IMR-90 (cell line): ENCODE measurements at regions of chr15 and their contacts with region 1.

Region 1: GRCh38 chr15:75453703-75454470 is 2.4 kb upstream of the SIN3A start:
- DNase-seq: peak; percentile 100
- ATAC-seq: peak; percentile 36
- H3K4me3 ChIP-seq: peak overlapping the region; percentile 60
- H3K27ac ChIP-seq: peak overlapping the region; percentile 85
- H3K4me1 ChIP-seq: peaks cover 11% of the 10 kb centered on the region
- H3K27me3 ChIP-seq: no peaks in the 10 kb centered on the region
- CTCF ChIP-seq: no peak
- POLR2A ChIP-seq: peak; percentile 72
- RAD21 ChIP-seq: no peak

Region 2: GRCh38 chr15:75023181-75023871 is 430.6 kb before region 1 on chr15 and contains the start of gene PPCDC:
- CTCF ChIA-PET with region 1: no interaction called
- POLR2A ChIA-PET with region 1: no interaction called
- dilution Hi-C with region 1: no loop called
- in situ Hi-C with region 1: no loop called
- intact Hi-C with region 1: loop called (anchors 10 kb)
- DNase-seq: peak; percentile 92
- ATAC-seq: peak; percentile 100
- H3K4me3 ChIP-seq: peak within 1 kb of the TSS; percentile 64
- H3K27ac ChIP-seq: peak within 1 kb of the TSS; percentile 75
- H3K4me1 ChIP-seq: peaks cover 2% of the 10 kb centered on the region; the same call in 1 of the 2 replicates
- H3K27me3 ChIP-seq: peaks cover 1% of the 10 kb centered on the region; the same call in 1 of the 2 replicates
- CTCF ChIP-seq: no peak
- POLR2A ChIP-seq: peak; percentile 84
- RAD21 ChIP-seq: no peak
- total RNA-seq, gene PPCDC: 5.6 and 13.3 TPM in 2 replicates

Region 3: GRCh38 chr15:75367913-75368688 is 85.8 kb before region 1 on chr15 and contains the start of gene MAN2C1:
- CTCF ChIA-PET with region 1: interaction called, 8 read pairs
- POLR2A ChIA-PET with region 1: no interaction called
- dilution Hi-C with region 1: no loop called
- in situ Hi-C with region 1: no loop called
- intact Hi-C with region 1: loop called (anchors 1 kb)
- DNase-seq: peak; percentile 94
- ATAC-seq: peak; percentile 93
- H3K4me3 ChIP-seq: peak within 1 kb of the TSS; percentile 71
- H3K27ac ChIP-seq: peak within 1 kb of the TSS; percentile 86
- H3K4me1 ChIP-seq: peaks cover 4% of the 10 kb centered on the region
- H3K27me3 ChIP-seq: no peaks in the 10 kb centered on the region
- CTCF ChIP-seq: peak; percentile 78
- POLR2A ChIP-seq: peak; percentile 92
- RAD21 ChIP-seq: peak; percentile 58
- total RNA-seq, gene MAN2C1: 29.7 and 34.8 TPM in 2 replicates

Region 4: GRCh38 chr15:75468913-75469598 is 15.2 kb after region 1 on chr15:
- CTCF ChIA-PET with region 1: no interaction called
- POLR2A ChIA-PET with region 1: interaction called, 34 read pairs
- dilution Hi-C with region 1: no loop called
- in situ Hi-C with region 1: no loop called
- intact Hi-C with region 1: no loop called
- DNase-seq: no peak
- ATAC-seq: no peak
- H3K4me3 ChIP-seq: no peak overlapping the region
- H3K27ac ChIP-seq: no peak overlapping the region
- H3K4me1 ChIP-seq: no peaks in the 10 kb centered on the region
- H3K27me3 ChIP-seq: no peaks in the 10 kb centered on the region
- CTCF ChIP-seq: no peak
- POLR2A ChIP-seq: no peak
- RAD21 ChIP-seq: no peak

Region 5: DNA sequence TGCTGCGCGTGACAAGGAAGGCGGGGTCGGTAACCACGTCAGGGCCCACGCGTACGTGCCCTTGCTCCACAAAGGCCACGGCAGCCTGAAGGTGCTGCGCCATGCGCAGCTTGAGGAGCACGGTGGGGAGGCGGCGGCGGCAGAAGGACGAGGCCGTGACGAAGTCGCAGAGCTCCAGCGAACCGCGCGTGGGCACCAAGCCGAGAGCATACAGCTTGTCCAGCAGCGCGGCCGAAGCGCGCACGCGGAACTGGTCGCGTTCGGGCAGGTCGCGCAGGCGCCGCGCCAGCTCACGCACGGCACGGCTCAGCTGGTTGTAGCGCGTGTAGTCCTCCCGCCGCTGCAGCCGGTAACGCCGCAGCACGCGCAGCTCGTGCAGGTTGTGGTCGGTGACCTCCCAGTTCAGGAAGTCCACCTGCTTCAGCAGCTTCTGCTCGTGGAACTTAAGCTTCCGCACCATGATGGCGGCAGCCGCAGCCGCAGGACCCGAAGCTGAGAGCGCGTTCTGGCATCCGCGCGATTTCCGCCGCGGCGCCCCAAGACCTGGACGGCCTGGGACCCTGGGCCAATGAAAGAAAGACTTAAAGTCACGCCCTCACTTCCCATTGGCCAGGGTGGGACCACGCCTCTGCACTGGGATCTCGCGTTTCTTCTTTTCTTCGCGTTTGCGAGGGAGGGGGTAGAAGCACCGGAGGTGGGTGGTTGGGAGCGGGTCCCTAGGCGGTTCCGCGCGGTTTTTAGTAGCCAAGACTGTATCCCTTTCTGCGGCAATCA is 186.0 kb after region 1 on chr15 and contains the start of gene IMP3:
- CTCF ChIA-PET with region 1: no interaction called
- POLR2A ChIA-PET with region 1: no interaction called
- dilution Hi-C with region 1: no loop called
- in situ Hi-C with region 1: no loop called
- intact Hi-C with region 1: loop called (anchors 5 kb)
- DNase-seq: peak; percentile 95
- ATAC-seq: peak; percentile 96
- H3K4me3 ChIP-seq: peak within 1 kb of the TSS; percentile 77
- H3K27ac ChIP-seq: peak within 1 kb of the TSS; percentile 92
- H3K4me1 ChIP-seq: peaks cover 4% of the 10 kb centered on the region; the same call in 1 of the 2 replicates
- H3K27me3 ChIP-seq: no peaks in the 10 kb centered on the region
- CTCF ChIP-seq: no peak
- POLR2A ChIP-seq: peak; percentile 94
- RAD21 ChIP-seq: no peak
- total RNA-seq, gene IMP3: 42.1 and 84.7 TPM in 2 replicates

Region 6: GRCh38 chr15:75647370-75648155 is 193.7 kb after region 1 on chr15 and contains the start of gene SNX33:
- CTCF ChIA-PET with region 1: no interaction called
- POLR2A ChIA-PET with region 1: interaction called, 12 read pairs
- dilution Hi-C with region 1: no loop called
- in situ Hi-C with region 1: no loop called
- intact Hi-C with region 1: no loop called
- DNase-seq: peak; percentile 89
- ATAC-seq: peak; percentile 81
- H3K4me3 ChIP-seq: peak within 1 kb of the TSS; percentile 88
- H3K27ac ChIP-seq: peak within 1 kb of the TSS; percentile 94
- H3K4me1 ChIP-seq: peaks cover 37% of the 10 kb centered on the region
- H3K27me3 ChIP-seq: no peaks in the 10 kb centered on the region
- CTCF ChIP-seq: peak; percentile 49
- POLR2A ChIP-seq: peak; percentile 84
- RAD21 ChIP-seq: peak; percentile 24; the same call in 1 of the 2 replicates
- total RNA-seq, gene SNX33: 11.9 and 12.7 TPM in 2 replicates